ENCODE measurements at regions of chr11 and their contacts with region 1.

Region 1: GRCh38 chr11:40894501-40894900 is 565.0 kb downstream of the LRRC4C start:
- DNase-seq: no peak
- ATAC-seq: no peak
- H3K4me3 ChIP-seq: no peak overlapping the region
- H3K27ac ChIP-seq: no peak overlapping the region
- H3K4me1 ChIP-seq: no peaks in the 10 kb centered on the region
- H3K27me3 ChIP-seq: no peaks in the 10 kb centered on the region
- CTCF ChIP-seq: no peak
- EP300 ChIP-seq: no peak
- POLR2A ChIP-seq: no peak
- RAD21 ChIP-seq: no peak

Region 2: GRCh38 chr11:40958707-40959106 is 64.2 kb after region 1 on chr11:
- CTCF ChIA-PET with region 1: no interaction called
- POLR2A ChIA-PET with region 1: no interaction called
- in situ Hi-C with region 1: loop called (anchors 10 kb)
- intact Hi-C with region 1: no loop called
- DNase-seq: no peak
- ATAC-seq: no peak
- H3K4me3 ChIP-seq: no peak overlapping the region
- H3K27ac ChIP-seq: no peak overlapping the region
- H3K4me1 ChIP-seq: no peaks in the 10 kb centered on the region
- H3K27me3 ChIP-seq: no peaks in the 10 kb centered on the region
- CTCF ChIP-seq: no peak
- EP300 ChIP-seq: no peak
- POLR2A ChIP-seq: no peak
- RAD21 ChIP-seq: no peak

Measured in HepG2 (cell line).